ENCODE measurements at regions of chr2 and their contacts with region 1.

Region 1: GRCh38 chr2:60998628-60999545 is 18.6 kb upstream of the PEX13 start:
- DNase-seq: peak; percentile 61
- CTCF ChIP-seq: no peak

Region 2: GRCh38 chr2:60710707-60711106 is 288.2 kb before region 1 on chr2:
- in situ Hi-C with region 1: loop called (anchors 5 kb)
- DNase-seq: no peak
- CTCF ChIP-seq: no peak

Region 3: DNA sequence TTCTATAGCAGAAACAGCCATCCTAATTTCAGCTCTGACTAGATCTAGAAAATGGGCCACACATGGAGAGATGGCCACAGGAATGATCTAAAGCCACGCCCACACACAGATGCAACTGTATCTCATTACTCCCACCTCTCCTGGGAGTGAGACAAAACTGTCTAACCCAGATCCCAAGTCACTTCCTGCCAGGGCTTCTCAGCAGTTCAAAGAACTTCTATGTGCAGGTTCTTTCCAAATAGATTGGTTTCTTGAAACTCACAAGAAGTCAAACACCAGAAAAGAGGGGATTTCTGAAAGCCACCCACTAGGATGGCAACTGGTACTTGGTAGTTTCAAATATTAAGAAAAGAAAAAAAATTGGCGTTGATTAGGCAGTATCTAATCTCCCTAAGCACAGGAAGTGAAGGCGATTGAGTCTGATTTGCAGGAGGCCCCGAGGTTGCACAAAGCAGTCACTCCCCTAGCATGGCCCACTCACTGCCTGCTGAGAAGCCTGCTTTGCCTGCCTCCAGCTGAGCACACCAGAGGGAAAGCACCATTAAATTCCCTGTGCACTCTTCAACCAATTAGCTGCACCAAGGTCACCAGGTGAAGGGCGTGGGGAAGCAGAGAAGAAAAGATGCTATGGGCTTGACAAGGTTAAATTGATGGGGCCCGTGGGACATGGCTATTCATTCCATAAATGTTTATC is 191.8 kb before region 1 on chr2:
- in situ Hi-C with region 1: loop called (anchors 5 kb)
- DNase-seq: peak; percentile 72
- CTCF ChIP-seq: no peak

Region 4: GRCh38 chr2:60867848-60868247 is 131.0 kb before region 1 on chr2:
- in situ Hi-C with region 1: no loop called
- DNase-seq: no peak
- CTCF ChIP-seq: no peak

Region 5: GRCh38 chr2:60961501-60961900 is 37.4 kb before region 1 on chr2:
- in situ Hi-C with region 1: no loop called
- DNase-seq: no peak
- CTCF ChIP-seq: no peak

Measured in GM13976 (cell line).